Motor neuron (in vitro differentiated cells): ENCODE measurements at regions of chr7 and their contacts with region 1.

Region 1: GRCh38 chr7:107725151-107725740 is 18.7 kb upstream of the CBLL1 start:
- ATAC-seq: peak in 1 of 8 experiments; percentile 43
- H3K4me3 ChIP-seq: no peak overlapping the region
- H3K27ac ChIP-seq: no peak overlapping the region
- H3K4me1 ChIP-seq: no peaks in the 10 kb centered on the region

Region 2: GRCh38 chr7:107579885-107580715 is 145.1 kb before region 1 on chr7 and contains the start of gene BCAP29:
- in situ Hi-C with region 1: loop called in 1 of 9 experiments (anchors 10 kb)
- ATAC-seq: peak; percentile 92 to 96 (median 94)
- H3K4me3 ChIP-seq: peak within 1 kb of the TSS; percentile 76 to 98 (median 95)
- H3K27ac ChIP-seq: peak within 1 kb of the TSS; percentile 66 to 89
- H3K4me1 ChIP-seq: peaks cover 4 to 5% of the 10 kb centered on the region in 2 donors
- total RNA-seq, gene BCAP29: 16.5 to 54.0 (median 28.9) TPM